ENCODE measurements at regions of chr1 and their contacts with region 1.

Region 1: GRCh38 chr1:53182111-53182593 is 14.5 kb upstream of the CPT2 start:
- DNase-seq: peak; percentile 78
- ATAC-seq: peak; percentile 45
- H3K4me3 ChIP-seq: peak overlapping the region; percentile 5 to 68 (median 41)
- H3K27ac ChIP-seq: peak overlapping the region; percentile 90
- H3K4me1 ChIP-seq: peaks cover 86% of the 10 kb centered on the region
- H3K27me3 ChIP-seq: 0 out of 5 replicates have a peak, but pooled peaks cover 0 to 4% of the 10 kb centered on the region in 2 experiments
- CTCF ChIP-seq: peak; percentile 87
- EP300 ChIP-seq: no peak
- POLR2A ChIP-seq: no peak
- RAD21 ChIP-seq: peak; percentile 67; the same call in 1 of the 2 replicates

Region 2: DNA sequence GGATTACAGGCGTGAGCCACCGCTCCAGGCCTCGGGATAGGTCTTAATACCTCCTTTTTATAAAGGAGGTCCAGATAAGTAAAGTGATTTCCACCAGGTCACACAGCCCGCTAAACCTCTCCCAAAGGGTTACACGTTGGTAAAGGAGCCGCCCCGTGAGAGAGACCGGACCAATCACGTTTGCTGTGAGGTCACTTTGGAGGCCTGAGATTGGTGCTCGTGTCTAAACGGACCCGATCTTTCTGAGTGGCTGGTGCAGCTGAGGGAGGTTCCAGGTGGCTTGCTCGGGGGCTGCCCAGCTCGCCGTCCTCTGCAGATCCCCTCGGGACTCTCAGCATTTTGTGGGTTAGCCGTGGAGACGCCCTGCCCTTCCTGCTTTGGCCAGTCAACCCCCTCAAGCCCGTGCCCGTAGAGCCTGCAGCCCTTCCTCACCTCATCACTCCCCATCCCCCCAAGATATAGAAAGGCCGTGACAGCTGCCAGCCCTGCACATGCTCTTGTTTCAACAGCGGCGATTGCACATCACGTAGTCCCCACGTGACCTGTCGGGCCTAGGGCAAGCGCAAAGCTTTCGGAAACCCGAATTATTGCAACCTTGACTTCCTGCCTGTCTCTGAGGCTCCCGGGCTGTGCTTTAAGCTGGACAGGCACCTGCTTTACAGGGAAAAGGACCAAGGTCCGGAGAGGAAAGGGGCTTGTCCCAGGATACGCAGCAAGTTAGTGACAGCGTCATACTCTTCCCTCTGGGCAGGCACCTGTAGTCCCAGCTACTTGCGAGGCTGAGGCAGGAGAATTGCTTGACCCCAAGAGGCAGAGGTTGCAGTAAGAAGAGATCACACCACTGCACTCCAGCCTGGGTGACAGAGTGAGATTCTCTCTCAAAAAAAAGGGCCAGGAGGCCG is 479.0 kb before region 1 on chr1:
- CTCF ChIA-PET with region 1: no interaction called
- POLR2A ChIA-PET with region 1: interaction called, 3 read pairs
- in situ Hi-C with region 1: loop called (anchors 10 kb)
- intact Hi-C with region 1: loop called (anchors 5 kb)
- DNase-seq: peak; percentile 94
- ATAC-seq: peak; percentile 92
- H3K4me3 ChIP-seq: peak overlapping the region; percentile 45 to 69 (median 49)
- H3K27ac ChIP-seq: peak overlapping the region; percentile 76
- H3K4me1 ChIP-seq: peaks cover 49% of the 10 kb centered on the region
- H3K27me3 ChIP-seq: no peaks in the 10 kb centered on the region
- CTCF ChIP-seq: no peak
- EP300 ChIP-seq: peak in 1 of 2 experiments; percentile 31; a peak in 1 of 4 replicates
- POLR2A ChIP-seq: peak; percentile 58 to 80; a peak in 3 of 4 replicates
- RAD21 ChIP-seq: no peak; the same call in 1 of the 2 replicates

Region 3: GRCh38 chr1:52920791-52921291 is 261.3 kb before region 1 on chr1:
- CTCF ChIA-PET with region 1: no interaction called
- POLR2A ChIA-PET with region 1: interaction called, 5 read pairs
- in situ Hi-C with region 1: loop called (anchors 5 kb)
- intact Hi-C with region 1: loop called (anchors 5 kb)
- DNase-seq: no peak
- ATAC-seq: peak; percentile 80
- H3K4me3 ChIP-seq: peak overlapping the region; percentile 64 to 86 (median 74)
- H3K27ac ChIP-seq: peak overlapping the region; percentile 91
- H3K4me1 ChIP-seq: peaks cover 73% of the 10 kb centered on the region
- H3K27me3 ChIP-seq: no peaks in the 10 kb centered on the region
- CTCF ChIP-seq: no peak
- EP300 ChIP-seq: no peak
- POLR2A ChIP-seq: no peak
- RAD21 ChIP-seq: no peak

Region 4: DNA sequence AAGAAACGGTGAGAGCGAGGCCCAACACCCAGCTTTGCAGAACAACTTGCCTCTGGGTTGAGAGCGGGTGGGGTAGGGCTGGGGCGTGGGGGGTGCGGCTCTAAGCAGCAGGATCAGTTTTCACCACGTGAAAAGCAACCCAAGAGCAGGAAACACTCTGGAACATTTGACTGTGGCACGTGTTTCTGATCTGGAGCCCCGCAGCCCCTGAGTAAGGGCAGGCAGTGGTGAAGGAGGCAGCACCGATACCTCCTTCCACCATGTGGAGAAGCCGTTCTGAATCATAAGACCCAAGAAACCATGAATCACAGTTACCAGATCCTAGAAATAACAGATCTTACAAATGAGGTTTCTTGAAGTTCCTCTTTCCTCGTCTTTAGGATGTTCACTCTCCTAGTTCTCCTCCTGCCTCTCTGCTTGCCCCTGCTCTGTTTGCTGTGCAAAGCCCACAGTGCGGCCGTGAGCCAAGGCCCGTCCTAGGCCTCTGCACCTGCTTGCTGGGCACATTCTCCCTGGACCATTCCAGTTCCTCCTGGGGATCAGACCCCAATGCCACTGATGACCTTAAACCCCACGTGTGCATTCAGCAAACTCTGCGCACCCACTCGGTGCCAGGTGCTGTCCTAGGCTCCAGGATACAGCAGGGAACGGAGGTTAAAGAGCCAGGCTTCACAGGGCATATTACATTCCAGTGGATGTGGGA is 71.6 kb before region 1 on chr1:
- CTCF ChIA-PET with region 1: no interaction called
- POLR2A ChIA-PET with region 1: interaction called, 7 read pairs
- in situ Hi-C with region 1: no loop called
- intact Hi-C with region 1: loop called (anchors 2 kb)
- DNase-seq: no peak
- ATAC-seq: peak; percentile 12
- H3K4me3 ChIP-seq: peak overlapping the region in 1 of 3 experiments; percentile 52; a peak in 1 of 6 replicates
- H3K27ac ChIP-seq: peak overlapping the region; percentile 73
- H3K4me1 ChIP-seq: peaks cover 99% of the 10 kb centered on the region
- H3K27me3 ChIP-seq: peaks cover 6 to 66% of the 10 kb centered on the region in 2 experiments
- CTCF ChIP-seq: no peak
- EP300 ChIP-seq: no peak
- POLR2A ChIP-seq: no peak
- RAD21 ChIP-seq: no peak

Region 5: GRCh38 chr1:53127306-53127945 is 54.7 kb before region 1 on chr1:
- CTCF ChIA-PET with region 1: no interaction called
- POLR2A ChIA-PET with region 1: interaction called, 12 read pairs
- in situ Hi-C with region 1: loop called (anchors 5 kb)
- intact Hi-C with region 1: loop called (anchors 5 kb)
- DNase-seq: no peak
- ATAC-seq: peak; percentile 57
- H3K4me3 ChIP-seq: no peak overlapping the region
- H3K27ac ChIP-seq: no peak overlapping the region
- H3K4me1 ChIP-seq: peaks cover 85% of the 10 kb centered on the region
- H3K27me3 ChIP-seq: peaks cover 3 to 5% of the 10 kb centered on the region in 2 experiments; a peak in 3 of 5 replicates
- CTCF ChIP-seq: no peak
- EP300 ChIP-seq: no peak
- POLR2A ChIP-seq: no peak
- RAD21 ChIP-seq: no peak

Region 6: GRCh38 chr1:53145942-53146708 is 36.0 kb before region 1 on chr1:
- CTCF ChIA-PET with region 1: no interaction called
- POLR2A ChIA-PET with region 1: interaction called, 37 read pairs
- in situ Hi-C with region 1: no loop called
- intact Hi-C with region 1: no loop called
- DNase-seq: peak; percentile 85
- ATAC-seq: peak; percentile 97
- H3K4me3 ChIP-seq: peak overlapping the region; percentile 50 to 70 (median 57); a peak in 5 of 6 replicates
- H3K27ac ChIP-seq: peak overlapping the region; percentile 88
- H3K4me1 ChIP-seq: peaks cover 61% of the 10 kb centered on the region
- H3K27me3 ChIP-seq: peaks cover 0 to 2% of the 10 kb centered on the region in 2 experiments; a peak in 1 of 5 replicates
- CTCF ChIP-seq: peak; percentile 30; the same call in 1 of the 2 replicates
- EP300 ChIP-seq: peak in 1 of 2 experiments; percentile 23; a peak in 1 of 4 replicates
- POLR2A ChIP-seq: peak; percentile 61 to 91
- RAD21 ChIP-seq: 0 out of 2 replicates have a peak, but pooled peaks have one; percentile 36

Region 7: GRCh38 chr1:53196485-53197270 is 14.5 kb after region 1 on chr1 and contains the start of gene CPT2:
- CTCF ChIA-PET with region 1: no interaction called
- POLR2A ChIA-PET with region 1: interaction called, 17 read pairs
- in situ Hi-C with region 1: no loop called
- intact Hi-C with region 1: no loop called
- DNase-seq: peak; percentile 79
- ATAC-seq: peak; percentile 98
- H3K4me3 ChIP-seq: peak within 1 kb of the TSS; percentile 84 to 91 (median 91)
- H3K27ac ChIP-seq: peak within 1 kb of the TSS; percentile 87
- H3K4me1 ChIP-seq: peaks cover 53% of the 10 kb centered on the region
- H3K27me3 ChIP-seq: no peaks in the 10 kb centered on the region; a peak in 1 of 5 replicates
- CTCF ChIP-seq: no peak
- EP300 ChIP-seq: peak in 1 of 2 experiments; percentile 27; a peak in 1 of 4 replicates
- POLR2A ChIP-seq: peak; percentile 78 to 97
- RAD21 ChIP-seq: no peak
- total RNA-seq, gene CPT2: 14.1 and 14.6 TPM in 2 replicates